Activated naive CD4-positive, alpha-beta T cell treated with anti-CD3 and anti-CD28 coated beads for 36 hours (primary cell): ENCODE measurements at regions of chr11 and their contacts with region 1.

Region 1: DNA sequence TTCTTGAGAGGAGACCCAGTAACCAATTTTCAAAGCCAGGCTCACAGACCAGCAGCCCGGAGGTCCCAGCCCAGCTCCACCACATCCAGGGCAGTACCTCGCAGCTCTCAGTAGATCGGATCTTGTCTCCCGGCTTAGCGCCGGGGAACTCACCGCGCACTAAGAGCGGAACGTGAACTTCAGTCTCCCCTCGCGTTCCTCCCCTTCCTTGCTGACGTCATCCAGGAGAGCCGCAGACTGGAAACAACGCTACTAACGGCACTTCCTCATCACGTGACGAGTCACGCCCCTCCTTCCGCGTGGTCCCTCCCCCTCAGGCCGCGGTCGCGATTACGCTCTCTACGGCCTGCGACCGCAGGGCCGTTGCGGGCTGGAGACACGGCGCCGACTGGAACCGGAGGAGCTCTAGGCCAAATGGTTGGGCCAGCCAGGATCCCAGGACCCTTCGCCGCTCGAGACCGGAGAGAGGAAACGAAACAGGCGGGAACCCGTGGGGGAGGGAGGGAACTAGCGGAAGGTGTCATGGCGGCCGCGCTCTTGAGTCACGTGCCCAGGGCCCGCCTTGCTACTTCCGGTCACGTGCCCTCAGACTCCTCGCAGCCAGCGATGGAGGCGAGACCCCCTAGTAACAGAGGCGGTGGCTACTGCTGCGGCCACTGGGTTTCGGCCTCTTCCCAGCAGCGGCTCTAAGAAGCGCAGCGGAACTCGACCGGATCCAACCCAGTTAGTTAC is at the starts of genes GTF2H1 and HPS5:
- DNase-seq: peak; percentile 98
- H3K4me3 Mint-ChIP-seq: peak within 1 kb of the TSS; percentile 98
- H3K27ac Mint-ChIP-seq: peak within 1 kb of the TSS; percentile 100
- H3K4me1 Mint-ChIP-seq: peaks cover 64% of the 10 kb centered on the region
- H3K27me3 Mint-ChIP-seq: no peaks in the 10 kb centered on the region
- total RNA-seq, gene GTF2H1: 33.4 to 34.1 TPM
- total RNA-seq, gene HPS5: 21.7 to 21.9 TPM

Region 2: DNA sequence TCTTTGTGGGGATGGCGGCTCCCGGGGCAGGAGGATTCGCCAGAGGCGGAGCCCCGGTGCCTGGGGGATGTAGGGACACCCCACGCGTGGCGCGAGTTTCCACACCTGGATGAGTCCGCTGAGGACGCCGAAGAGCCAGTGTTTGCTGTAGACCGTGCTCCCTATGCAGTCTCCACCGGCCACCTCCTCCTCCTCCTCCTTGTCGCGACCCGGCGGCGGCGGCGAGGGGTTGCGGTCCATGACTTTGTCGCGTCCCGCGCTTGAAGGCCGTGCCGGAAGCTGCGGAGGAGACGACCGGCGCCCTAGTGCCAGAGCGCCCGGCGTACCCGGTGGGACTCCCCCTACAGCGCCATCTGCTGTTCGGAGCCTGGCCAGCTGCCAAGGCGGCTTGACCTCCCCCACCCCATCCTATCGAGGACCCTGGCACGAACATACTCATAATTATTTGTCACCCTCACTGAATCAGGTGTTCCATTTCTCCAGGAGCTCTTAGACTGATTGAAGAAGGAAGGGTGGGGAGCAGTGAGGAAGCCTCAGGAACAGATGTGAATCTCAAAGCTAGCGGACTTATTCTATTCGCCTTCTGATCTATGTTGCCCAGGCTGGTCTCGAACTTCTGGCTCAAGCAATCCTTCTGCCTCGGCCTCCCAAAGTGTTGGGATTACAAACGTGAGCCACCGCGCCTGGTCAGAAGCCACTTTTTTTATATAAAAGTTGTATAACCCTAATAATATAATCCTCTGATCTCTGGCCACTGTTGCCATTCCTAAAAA is 216.2 kb before region 1 on chr11 and contains the start of gene SAAL1:
- CTCF ChIA-PET with region 1: no interaction called
- intact Hi-C with region 1: loop called (anchors 1 kb)
- DNase-seq: peak; percentile 93
- H3K4me3 Mint-ChIP-seq: peak within 1 kb of the TSS; percentile 90
- H3K27ac Mint-ChIP-seq: peak within 1 kb of the TSS; percentile 83
- H3K4me1 Mint-ChIP-seq: peaks cover 34% of the 10 kb centered on the region
- H3K27me3 Mint-ChIP-seq: no peaks in the 10 kb centered on the region
- total RNA-seq, gene SAAL1: 36.4 to 37.0 TPM

Region 3: GRCh38 chr11:18294862-18295261 is 27.3 kb before region 1 on chr11:
- CTCF ChIA-PET with region 1: no interaction called
- intact Hi-C with region 1: loop called (anchors 2 kb)
- DNase-seq: peak; percentile 10
- H3K4me3 Mint-ChIP-seq: no peak overlapping the region
- H3K27ac Mint-ChIP-seq: no peak overlapping the region
- H3K4me1 Mint-ChIP-seq: peaks cover 2% of the 10 kb centered on the region
- H3K27me3 Mint-ChIP-seq: no peaks in the 10 kb centered on the region

Region 4: GRCh38 chr11:18383388-18384156 is 61.4 kb after region 1 on chr11:
- CTCF ChIA-PET with region 1: interaction called, 3 read pairs
- intact Hi-C with region 1: loop called (anchors 1 kb)
- DNase-seq: peak; percentile 92
- H3K4me3 Mint-ChIP-seq: peak overlapping the region; percentile 42
- H3K27ac Mint-ChIP-seq: peak overlapping the region; percentile 89
- H3K4me1 Mint-ChIP-seq: peaks cover 34% of the 10 kb centered on the region
- H3K27me3 Mint-ChIP-seq: no peaks in the 10 kb centered on the region

Region 5: GRCh38 chr11:18615628-18616392 is 293.7 kb after region 1 on chr11:
- CTCF ChIA-PET with region 1: no interaction called
- intact Hi-C with region 1: loop called (anchors 1 kb)
- DNase-seq: no peak
- H3K4me3 Mint-ChIP-seq: no peak overlapping the region
- H3K27ac Mint-ChIP-seq: peak overlapping the region; percentile 78
- H3K4me1 Mint-ChIP-seq: peaks cover 46% of the 10 kb centered on the region
- H3K27me3 Mint-ChIP-seq: no peaks in the 10 kb centered on the region

Region 6: GRCh38 chr11:18706330-18707243 is 384.4 kb after region 1 on chr11:
- CTCF ChIA-PET with region 1: no interaction called
- intact Hi-C with region 1: loop called (anchors 5 kb)
- DNase-seq: peak; percentile 77
- H3K4me3 Mint-ChIP-seq: peak overlapping the region; percentile 71
- H3K27ac Mint-ChIP-seq: peak overlapping the region; percentile 69
- H3K4me1 Mint-ChIP-seq: peaks cover 23% of the 10 kb centered on the region
- H3K27me3 Mint-ChIP-seq: no peaks in the 10 kb centered on the region